T-cell (primary cell): ENCODE measurements at regions of chr4 and their contacts with region 1.

Region 1: DNA sequence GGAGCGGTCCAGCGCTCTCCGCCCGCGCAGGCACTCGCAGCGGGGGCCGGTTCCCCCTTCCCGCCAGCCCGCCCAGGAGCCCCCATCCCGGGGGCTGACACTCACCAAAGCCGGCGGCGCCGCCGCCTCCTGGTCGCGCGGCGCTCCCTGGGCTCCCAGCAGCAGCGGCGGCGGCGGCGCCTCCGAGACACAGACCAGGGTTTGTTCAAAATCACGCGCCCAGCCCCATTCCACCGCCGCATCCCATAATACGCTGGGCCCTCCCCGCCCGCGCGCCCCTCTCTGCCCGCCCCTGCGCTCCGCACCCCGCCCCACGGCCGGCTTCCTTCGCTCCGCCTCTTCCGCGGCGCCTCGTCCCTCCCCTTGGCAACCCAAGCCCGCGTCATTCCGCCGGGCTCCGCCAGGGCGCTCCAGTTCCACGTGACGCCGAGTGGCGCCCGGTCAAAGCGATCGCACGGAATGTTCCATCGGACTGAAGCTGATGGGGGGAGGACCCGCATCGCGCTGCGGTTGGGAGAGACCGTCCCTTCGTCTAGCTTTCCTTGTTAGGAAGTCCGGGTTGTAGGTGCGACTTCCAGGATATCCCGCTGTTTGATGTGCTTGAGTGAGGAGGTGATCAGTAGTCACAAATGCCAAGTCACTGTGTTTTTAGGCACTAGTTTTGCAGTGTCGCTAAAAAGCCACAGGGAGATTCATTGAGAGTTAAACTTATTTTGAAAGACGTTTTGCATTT is 2.2 kb upstream of the LIN54 start:
- DNase-seq: peak; percentile 90 to 98 (median 95)
- ATAC-seq: peak; percentile 84 to 90 (median 88)
- H3K4me3 ChIP-seq: peak overlapping the region; percentile 77 to 79
- H3K4me3 Mint-ChIP-seq: peak overlapping the region; percentile 90 to 99 (median 91)
- H3K27ac ChIP-seq: peak overlapping the region; percentile 57
- H3K27ac Mint-ChIP-seq: peak overlapping the region; percentile 92 to 97
- H3K4me1 ChIP-seq: peaks cover 20 to 26% of the 10 kb centered on the region in 2 experiments
- H3K4me1 Mint-ChIP-seq: peaks cover 38 to 54% (median 49%) of the 10 kb centered on the region in 3 donors
- H3K27me3 ChIP-seq: no peaks in the 10 kb centered on the region
- H3K27me3 Mint-ChIP-seq: no peaks in the 10 kb centered on the region

Region 2: GRCh38 chr4:82909326-82909725 is 103.5 kb before region 1 on chr4:
- CTCF ChIA-PET with region 1: no interaction called
- POLR2A ChIA-PET with region 1: no interaction called
- DNase-seq: no peak
- ATAC-seq: no peak
- H3K4me3 ChIP-seq: no peak overlapping the region
- H3K4me3 Mint-ChIP-seq: no peak overlapping the region
- H3K27ac ChIP-seq: no peak overlapping the region
- H3K27ac Mint-ChIP-seq: no peak overlapping the region
- H3K4me1 ChIP-seq: no peaks in the 10 kb centered on the region
- H3K4me1 Mint-ChIP-seq: peaks cover 6 to 9% (median 7%) of the 10 kb centered on the region in 3 donors
- H3K27me3 ChIP-seq: no peaks in the 10 kb centered on the region
- H3K27me3 Mint-ChIP-seq: no peaks in the 10 kb centered on the region

Region 3: DNA sequence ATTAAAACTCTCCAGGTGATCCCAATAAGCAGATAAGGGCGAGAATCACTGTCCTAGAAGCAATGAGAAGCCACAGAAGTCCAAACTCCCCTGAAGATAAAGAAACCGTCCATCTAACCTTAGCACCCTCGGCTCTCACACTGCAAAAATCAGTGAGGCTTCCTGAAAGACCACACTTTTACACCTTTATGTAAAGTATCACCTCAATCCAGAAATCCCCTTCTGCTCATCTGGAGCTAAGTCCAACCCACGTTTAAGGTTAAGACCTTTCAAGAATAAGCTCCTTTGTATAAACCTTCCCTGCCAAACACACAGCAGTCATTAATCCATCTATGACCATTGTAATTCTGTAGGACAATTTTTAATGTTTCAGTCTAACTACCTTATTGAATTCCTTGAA is 43.9 kb before region 1 on chr4:
- CTCF ChIA-PET with region 1: no interaction called
- POLR2A ChIA-PET with region 1: interaction called, 6 to 11 read pairs
- DNase-seq: no peak
- ATAC-seq: no peak
- H3K4me3 ChIP-seq: no peak overlapping the region
- H3K4me3 Mint-ChIP-seq: no peak overlapping the region
- H3K27ac ChIP-seq: no peak overlapping the region
- H3K27ac Mint-ChIP-seq: no peak overlapping the region
- H3K4me1 ChIP-seq: no peaks in the 10 kb centered on the region
- H3K4me1 Mint-ChIP-seq: peaks cover 0 to 3% (median 0%) of the 10 kb centered on the region in 3 donors
- H3K27me3 ChIP-seq: no peaks in the 10 kb centered on the region
- H3K27me3 Mint-ChIP-seq: no peaks in the 10 kb centered on the region

Region 4: DNA sequence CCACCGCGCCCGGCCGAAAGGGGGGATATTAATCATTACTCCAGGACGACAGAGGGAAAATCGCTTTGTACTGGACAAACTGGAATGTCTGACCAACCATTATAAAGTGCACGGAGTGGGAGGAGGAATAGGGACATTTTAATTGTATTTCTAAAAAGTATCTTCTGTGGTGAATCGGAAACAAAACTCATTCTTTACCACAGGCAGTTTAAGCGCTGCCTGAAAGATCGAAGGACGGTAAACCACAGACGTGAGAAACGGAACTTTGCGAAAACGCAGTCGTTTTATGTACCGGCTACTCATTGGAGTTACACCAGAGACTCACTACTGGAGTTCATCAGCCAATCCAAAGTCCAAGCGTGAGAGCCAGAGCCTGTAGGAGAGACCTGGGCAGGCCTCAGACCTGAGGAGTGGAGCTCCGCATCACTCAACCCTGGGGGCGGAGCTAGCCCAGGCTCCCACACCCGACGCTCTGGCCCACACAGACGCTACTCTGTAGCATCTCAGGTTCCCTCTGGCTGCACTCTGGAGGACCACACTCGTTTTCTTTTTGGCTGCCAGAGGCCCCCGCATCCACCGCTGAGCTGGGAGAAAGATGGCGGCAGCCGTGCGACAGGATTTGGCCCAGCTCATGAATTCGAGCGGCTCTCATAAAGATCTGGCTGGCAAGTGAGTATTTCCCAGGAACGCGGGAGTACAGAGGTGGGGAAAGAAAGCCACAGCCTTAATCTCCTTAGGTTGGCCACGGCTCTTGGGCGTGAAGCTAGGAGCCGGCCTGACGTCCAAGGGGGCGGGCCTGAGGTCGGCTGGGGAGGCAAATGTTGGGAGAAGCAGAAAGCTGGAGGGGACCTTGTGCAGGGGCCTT is 22.0 kb after region 1 on chr4 and contains the start of gene COPS4:
- CTCF ChIA-PET with region 1: interaction called, 9 to 29 read pairs
- POLR2A ChIA-PET with region 1: interaction called, 4 to 28 read pairs
- DNase-seq: peak; percentile 80 to 99 (median 95)
- ATAC-seq: peak; percentile 96 to 99 (median 96)
- H3K4me3 ChIP-seq: peak within 1 kb of the TSS; percentile 73 to 92
- H3K4me3 Mint-ChIP-seq: peak within 1 kb of the TSS; percentile 94 to 99 (median 97)
- H3K27ac ChIP-seq: peak within 1 kb of the TSS; percentile 77
- H3K27ac Mint-ChIP-seq: peak within 1 kb of the TSS; percentile 96 to 99
- H3K4me1 ChIP-seq: peaks cover 10 to 13% of the 10 kb centered on the region in 2 experiments
- H3K4me1 Mint-ChIP-seq: peaks cover 40 to 41% (median 40%) of the 10 kb centered on the region in 3 donors
- H3K27me3 ChIP-seq: no peaks in the 10 kb centered on the region
- H3K27me3 Mint-ChIP-seq: no peaks in the 10 kb centered on the region
- total RNA-seq, gene COPS4: 19.9 to 28.3 (median 22.2) TPM